ENCODE measurements at regions of chr11 and their contacts with region 1.

Region 1: GRCh38 chr11:66311965-66312548 is 4.8 kb downstream of the CD248 start:
- DNase-seq: peak; percentile 94 to 100 (median 99)
- ATAC-seq: peak; percentile 71
- H3K4me3 ChIP-seq: peak overlapping the region; percentile 51 to 79
- H3K4me3 Mint-ChIP-seq: peak overlapping the region; percentile 93
- H3K27ac ChIP-seq: peak overlapping the region; percentile 76 to 98
- H3K27ac Mint-ChIP-seq: peak overlapping the region; percentile 99
- H3K4me1 ChIP-seq: peaks cover 6% of the 10 kb centered on the region
- H3K4me1 Mint-ChIP-seq: peaks cover 20% of the 10 kb centered on the region
- H3K27me3 ChIP-seq: no peaks in the 10 kb centered on the region
- H3K27me3 Mint-ChIP-seq: no peaks in the 10 kb centered on the region
- CTCF ChIP-seq: peak; percentile 98

Region 2: DNA sequence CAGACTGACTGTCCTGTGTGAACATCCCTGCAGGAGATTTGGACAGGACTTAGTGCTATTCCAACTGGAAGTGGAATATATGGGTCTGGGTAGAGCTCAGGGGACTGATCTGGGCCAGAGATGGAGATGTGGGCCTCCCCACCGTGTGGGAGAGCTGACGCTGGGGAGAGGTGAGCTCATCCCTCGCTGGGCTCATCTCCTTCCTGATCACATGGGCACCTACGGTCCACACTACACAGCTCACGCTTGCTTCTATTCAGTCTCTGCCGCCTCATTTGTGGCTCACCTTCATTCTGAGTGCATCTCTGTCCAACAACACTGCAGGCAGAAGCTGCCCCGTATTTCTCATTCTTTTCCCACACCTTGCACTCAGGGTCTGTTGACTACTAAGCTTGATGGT is 60.2 kb before region 1 on chr11:
- CTCF ChIA-PET with region 1: no interaction called
- POLR2A ChIA-PET with region 1: no interaction called
- intact Hi-C with region 1: no loop called
- DNase-seq: no peak
- ATAC-seq: no peak
- H3K4me3 ChIP-seq: no peak overlapping the region
- H3K4me3 Mint-ChIP-seq: no peak overlapping the region
- H3K27ac ChIP-seq: no peak overlapping the region
- H3K27ac Mint-ChIP-seq: peak overlapping the region; percentile 73
- H3K4me1 ChIP-seq: peaks cover 15% of the 10 kb centered on the region
- H3K4me1 Mint-ChIP-seq: peaks cover 10% of the 10 kb centered on the region
- H3K27me3 ChIP-seq: no peaks in the 10 kb centered on the region
- H3K27me3 Mint-ChIP-seq: no peaks in the 10 kb centered on the region
- CTCF ChIP-seq: no peak

Region 3: DNA sequence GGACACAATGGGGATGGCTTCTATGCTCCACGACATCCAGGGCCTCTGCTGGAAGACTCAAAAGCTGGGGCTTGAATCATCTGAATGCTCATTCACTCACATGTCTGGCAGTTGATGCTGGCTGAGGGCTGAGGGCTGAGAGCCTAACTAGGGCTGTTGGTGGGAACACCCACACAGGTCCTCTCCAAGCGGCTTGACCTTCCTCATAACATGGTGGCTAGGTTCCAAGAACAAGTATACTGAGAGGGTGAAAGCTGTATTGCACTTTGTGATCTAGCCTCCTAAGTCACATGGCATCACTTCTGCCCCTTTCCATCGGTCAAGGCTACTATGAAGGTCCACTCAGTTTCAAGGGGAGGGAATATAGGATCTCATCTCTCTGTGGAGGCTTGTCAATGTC is 12.9 kb before region 1 on chr11:
- CTCF ChIA-PET with region 1: interaction called, 16 read pairs
- POLR2A ChIA-PET with region 1: interaction called, 3 read pairs
- intact Hi-C with region 1: no loop called
- DNase-seq: no peak
- ATAC-seq: no peak
- H3K4me3 ChIP-seq: no peak overlapping the region
- H3K4me3 Mint-ChIP-seq: no peak overlapping the region
- H3K27ac ChIP-seq: no peak overlapping the region
- H3K27ac Mint-ChIP-seq: no peak overlapping the region
- H3K4me1 ChIP-seq: no peaks in the 10 kb centered on the region
- H3K4me1 Mint-ChIP-seq: no peaks in the 10 kb centered on the region
- H3K27me3 ChIP-seq: no peaks in the 10 kb centered on the region
- H3K27me3 Mint-ChIP-seq: peaks cover 4% of the 10 kb centered on the region
- CTCF ChIP-seq: no peak

Region 4: DNA sequence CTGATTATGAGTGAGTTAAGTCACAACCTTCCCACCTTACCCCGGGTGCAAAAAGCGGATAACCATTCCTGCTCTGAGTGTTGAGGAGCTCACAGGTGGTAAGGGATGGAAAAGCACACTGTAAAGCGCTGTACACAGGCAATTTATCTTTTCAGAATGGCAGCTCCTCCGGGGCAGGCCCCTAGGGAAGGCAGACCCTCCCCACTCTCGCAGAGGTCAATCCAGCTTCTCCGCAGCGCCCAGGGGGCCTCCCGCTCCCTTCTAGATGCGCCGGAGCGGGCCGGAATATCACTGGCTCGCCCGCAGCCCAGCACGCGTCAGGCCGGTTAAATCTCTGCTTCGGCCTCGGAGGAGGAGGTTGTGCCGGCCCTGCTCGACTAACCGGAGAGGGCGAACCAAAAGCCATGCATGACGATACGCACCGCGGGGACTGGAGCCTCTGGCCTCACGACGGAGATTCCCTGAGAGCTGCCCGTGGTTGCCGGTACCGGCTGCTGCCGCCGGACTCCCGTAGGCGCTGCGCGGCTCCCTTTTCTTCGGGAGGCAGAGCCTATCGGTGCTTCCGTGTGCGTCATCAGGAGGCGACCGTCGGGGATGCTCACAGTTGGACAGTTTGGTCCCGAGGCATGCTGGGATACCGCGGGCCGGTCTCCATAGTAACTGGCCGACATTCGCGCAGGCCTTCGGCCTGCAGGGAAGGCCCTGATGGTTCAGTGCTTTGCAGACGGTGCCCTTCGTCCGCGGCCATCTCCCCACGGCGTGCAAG is 32.7 kb after region 1 on chr11 and contains the start of gene BRMS1:
- CTCF ChIA-PET with region 1: interaction called, 59 read pairs
- POLR2A ChIA-PET with region 1: interaction called, 45 read pairs
- intact Hi-C with region 1: loop called (anchors 1 kb)
- DNase-seq: peak; percentile 89 to 98 (median 97)
- ATAC-seq: peak; percentile 81
- H3K4me3 ChIP-seq: peak within 1 kb of the TSS; percentile 79
- H3K4me3 Mint-ChIP-seq: peak within 1 kb of the TSS; percentile 96
- H3K27ac ChIP-seq: peak within 1 kb of the TSS; percentile 75 to 87
- H3K27ac Mint-ChIP-seq: peak within 1 kb of the TSS; percentile 94
- H3K4me1 ChIP-seq: peaks cover 36% of the 10 kb centered on the region
- H3K4me1 Mint-ChIP-seq: peaks cover 54% of the 10 kb centered on the region
- H3K27me3 ChIP-seq: no peaks in the 10 kb centered on the region
- H3K27me3 Mint-ChIP-seq: peaks cover 2% of the 10 kb centered on the region
- CTCF ChIP-seq: no peak
- total RNA-seq, gene BRMS1: 66.7 to 68.0 TPM

Region 5: GRCh38 chr11:66438504-66439466 is 126.7 kb after region 1 on chr11 and contains the start of gene MRPL11:
- CTCF ChIA-PET with region 1: interaction called, 4 read pairs
- POLR2A ChIA-PET with region 1: interaction called, 4 read pairs
- intact Hi-C with region 1: loop called in 1 of 2 experiments (anchors 2 kb)
- DNase-seq: peak; percentile 79 to 96 (median 90)
- ATAC-seq: peak; percentile 99
- H3K4me3 ChIP-seq: peak within 1 kb of the TSS; percentile 72 to 78
- H3K4me3 Mint-ChIP-seq: peak within 1 kb of the TSS; percentile 91
- H3K27ac ChIP-seq: peak within 1 kb of the TSS; percentile 66 to 85
- H3K27ac Mint-ChIP-seq: peak within 1 kb of the TSS; percentile 98
- H3K4me1 ChIP-seq: peaks cover 7% of the 10 kb centered on the region
- H3K4me1 Mint-ChIP-seq: peaks cover 10% of the 10 kb centered on the region
- H3K27me3 ChIP-seq: no peaks in the 10 kb centered on the region
- H3K27me3 Mint-ChIP-seq: peaks cover 2% of the 10 kb centered on the region
- CTCF ChIP-seq: peak; percentile 64
- total RNA-seq, gene MRPL11: 19.8 to 20.6 TPM

Region 6: DNA sequence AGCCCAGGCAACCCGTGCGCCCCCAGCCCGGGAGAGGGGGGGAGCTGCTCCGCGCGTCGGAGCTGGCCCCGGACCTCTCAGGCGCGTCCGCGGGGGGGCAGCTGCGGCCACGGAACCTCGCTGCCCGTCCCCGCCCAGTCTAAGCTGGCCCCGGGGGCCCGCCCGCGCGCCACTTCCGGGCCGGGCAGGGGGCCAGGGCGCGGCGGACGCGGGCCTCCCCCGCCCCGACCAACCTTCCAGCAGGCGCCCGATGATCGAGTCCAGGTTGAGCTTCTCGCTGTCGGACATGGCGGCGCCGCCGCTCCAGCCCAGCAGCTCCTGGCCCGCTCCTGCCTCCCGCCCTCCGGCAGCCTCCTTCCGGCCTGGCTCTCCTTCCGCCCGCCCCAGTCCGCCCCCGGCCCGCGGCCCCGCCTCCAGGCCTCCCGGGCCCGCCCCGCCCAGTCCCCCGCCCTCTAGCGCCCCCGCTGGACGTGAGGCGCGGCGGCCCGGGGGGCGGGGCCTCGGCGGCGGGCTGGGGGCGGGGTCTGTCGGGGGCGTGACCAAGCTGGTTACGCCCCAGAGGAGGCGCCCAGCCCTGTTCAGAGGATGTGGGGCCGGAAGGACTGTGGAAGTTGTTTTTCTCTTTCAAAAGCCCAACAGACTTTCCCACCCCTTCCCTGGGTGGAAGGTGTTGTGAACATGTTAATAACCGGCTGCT is 1089.6 kb after region 1 on chr11 and contains the start of gene PPP1CA:
- CTCF ChIA-PET with region 1: no interaction called
- POLR2A ChIA-PET with region 1: no interaction called
- intact Hi-C with region 1: loop called in 1 of 2 experiments (anchors 10 kb)
- DNase-seq: peak; percentile 86 to 98 (median 92)
- ATAC-seq: peak; percentile 78
- H3K4me3 ChIP-seq: peak within 1 kb of the TSS; percentile 88 to 98
- H3K4me3 Mint-ChIP-seq: peak within 1 kb of the TSS; percentile 95
- H3K27ac ChIP-seq: peak within 1 kb of the TSS; percentile 75 to 79
- H3K27ac Mint-ChIP-seq: peak within 1 kb of the TSS; percentile 85
- H3K4me1 ChIP-seq: peaks cover 75% of the 10 kb centered on the region
- H3K4me1 Mint-ChIP-seq: peaks cover 65% of the 10 kb centered on the region
- H3K27me3 ChIP-seq: no peaks in the 10 kb centered on the region
- H3K27me3 Mint-ChIP-seq: no peaks in the 10 kb centered on the region
- CTCF ChIP-seq: peak; percentile 52
- total RNA-seq, gene PPP1CA: 40.5 to 42.2 TPM

Measured in CD8-positive, alpha-beta T cell (primary cell).